Calu3 (cell line): ENCODE measurements at regions of chr9 and their contacts with region 1.

Region 1: DNA sequence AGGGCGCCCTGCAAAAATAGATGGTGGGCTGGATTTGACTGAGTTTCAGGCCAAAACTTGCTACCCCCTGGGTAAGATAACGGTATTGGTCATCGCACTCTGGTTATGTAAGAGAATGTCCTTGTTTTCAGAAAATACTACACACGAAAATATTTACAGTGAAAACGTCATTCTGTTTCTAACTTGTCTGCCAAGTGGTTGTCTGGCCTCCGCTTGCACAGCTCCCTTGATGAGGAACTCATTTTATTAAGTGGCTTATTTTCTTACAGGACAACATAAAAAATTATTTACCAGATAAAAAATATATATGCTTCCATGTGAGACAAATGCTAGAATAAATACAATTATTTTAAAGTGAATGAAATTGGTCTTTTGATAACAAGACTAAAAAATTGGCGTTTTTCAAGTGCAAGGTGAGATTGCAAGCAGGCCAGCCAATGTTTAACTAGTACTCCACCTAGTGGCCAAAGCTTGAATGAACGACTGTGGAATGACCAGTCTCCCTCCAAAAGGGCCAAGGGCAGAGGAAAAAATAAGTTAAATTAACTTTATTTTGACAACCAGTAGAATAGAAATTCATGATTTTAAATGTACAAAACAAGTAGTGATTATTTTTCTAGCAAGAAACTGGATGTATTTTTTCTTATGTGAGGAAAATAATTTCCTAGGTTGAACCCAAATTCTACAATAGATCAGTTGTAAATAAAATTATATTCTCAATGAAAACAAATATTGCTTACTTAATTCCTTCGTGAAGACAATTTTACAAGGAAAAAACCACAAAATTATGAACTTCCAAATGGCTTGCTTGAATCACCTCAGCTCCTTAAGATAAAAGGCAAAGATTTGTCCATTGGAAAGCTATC is 93.2 kb downstream of the ZFAND5 start:
- DNase-seq: peak; percentile 51
- H3K4me3 Mint-ChIP-seq: no peak overlapping the region
- H3K27ac Mint-ChIP-seq: no peak overlapping the region
- H3K4me1 Mint-ChIP-seq: no peaks in the 10 kb centered on the region
- H3K27me3 Mint-ChIP-seq: no peaks in the 10 kb centered on the region
- CTCF ChIP-seq: peak; percentile 41

Region 2: GRCh38 chr9:72013292-72013760 is 258.5 kb before region 1 on chr9:
- CTCF ChIA-PET with region 1: no interaction called
- intact Hi-C with region 1: no loop called
- DNase-seq: peak; percentile 25
- H3K4me3 Mint-ChIP-seq: peak overlapping the region; percentile 21
- H3K27ac Mint-ChIP-seq: peak overlapping the region; percentile 90
- H3K4me1 Mint-ChIP-seq: peaks cover 24% of the 10 kb centered on the region
- H3K27me3 Mint-ChIP-seq: no peaks in the 10 kb centered on the region
- CTCF ChIP-seq: no peak

Region 3: GRCh38 chr9:72154468-72155281 is 117.2 kb before region 1 on chr9:
- CTCF ChIA-PET with region 1: no interaction called
- intact Hi-C with region 1: loop called (anchors 5 kb)
- DNase-seq: peak; percentile 44
- H3K4me3 Mint-ChIP-seq: peak overlapping the region; percentile 52
- H3K27ac Mint-ChIP-seq: peak overlapping the region; percentile 92
- H3K4me1 Mint-ChIP-seq: peaks cover 28% of the 10 kb centered on the region
- H3K27me3 Mint-ChIP-seq: no peaks in the 10 kb centered on the region
- CTCF ChIP-seq: no peak

Region 4: GRCh38 chr9:72203205-72203803 is 68.5 kb before region 1 on chr9:
- CTCF ChIA-PET with region 1: interaction called, 12 read pairs
- intact Hi-C with region 1: loop called (anchors 1 kb)
- DNase-seq: peak; percentile 34
- H3K4me3 Mint-ChIP-seq: no peak overlapping the region
- H3K27ac Mint-ChIP-seq: no peak overlapping the region
- H3K4me1 Mint-ChIP-seq: peaks cover 10% of the 10 kb centered on the region
- H3K27me3 Mint-ChIP-seq: no peaks in the 10 kb centered on the region
- CTCF ChIP-seq: peak; percentile 61

Region 5: DNA sequence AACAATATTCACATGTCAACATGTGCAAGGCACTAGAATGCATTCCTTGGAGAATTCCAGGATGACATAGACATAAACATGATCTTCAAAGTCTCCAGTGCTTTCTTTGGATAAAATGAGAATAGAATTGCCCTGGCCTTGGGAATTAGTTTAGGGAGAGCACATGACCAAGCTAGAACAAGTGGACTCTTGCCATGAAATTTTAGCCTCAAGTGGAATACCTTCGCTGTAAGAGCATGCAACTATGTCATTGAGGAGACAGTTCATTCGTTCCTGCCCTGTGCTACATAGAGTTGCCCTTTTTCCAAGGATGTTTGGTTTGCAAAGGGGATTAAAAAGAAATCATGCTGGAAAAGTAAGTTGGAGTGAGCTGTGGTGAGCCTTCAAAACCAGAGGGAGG is 50.4 kb after region 1 on chr9:
- CTCF ChIA-PET with region 1: no interaction called
- intact Hi-C with region 1: no loop called
- DNase-seq: no peak
- H3K4me3 Mint-ChIP-seq: no peak overlapping the region
- H3K27ac Mint-ChIP-seq: no peak overlapping the region
- H3K4me1 Mint-ChIP-seq: peaks cover 9% of the 10 kb centered on the region
- H3K27me3 Mint-ChIP-seq: no peaks in the 10 kb centered on the region
- CTCF ChIP-seq: no peak

Region 6: DNA sequence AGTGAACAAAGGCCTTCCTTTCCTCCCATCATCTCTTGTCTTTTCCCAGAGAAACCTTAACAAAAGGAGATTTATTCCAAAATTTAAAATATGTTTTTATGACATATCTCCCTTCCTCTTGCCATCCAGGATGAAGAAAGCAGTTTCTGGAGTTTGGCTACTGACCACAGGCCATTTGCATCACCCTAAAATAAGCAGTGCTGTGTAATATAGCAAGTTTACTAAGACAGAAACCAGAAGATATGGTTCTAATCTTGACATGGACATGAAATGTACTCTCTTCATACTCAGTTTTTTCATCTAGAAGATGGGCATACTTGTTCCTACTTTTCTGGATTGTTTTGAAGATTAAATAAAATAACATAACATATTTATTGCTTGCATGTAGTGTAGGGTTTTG is 143.3 kb after region 1 on chr9:
- CTCF ChIA-PET with region 1: no interaction called
- intact Hi-C with region 1: no loop called
- DNase-seq: no peak
- H3K4me3 Mint-ChIP-seq: no peak overlapping the region
- H3K27ac Mint-ChIP-seq: no peak overlapping the region
- H3K4me1 Mint-ChIP-seq: no peaks in the 10 kb centered on the region
- H3K27me3 Mint-ChIP-seq: no peaks in the 10 kb centered on the region
- CTCF ChIP-seq: no peak